Activated CD4-positive, alpha-beta memory T cell treated with anti-CD3 and anti-CD28 coated beads for 36 hours (primary cell): ENCODE measurements at regions of chr10 and their contacts with region 1.

Region 1: GRCh38 chr10:95864906-95865813 is 42.6 kb upstream of the CC2D2B start:
- DNase-seq: peak; percentile 61
- H3K4me3 Mint-ChIP-seq: no peak overlapping the region
- H3K27ac Mint-ChIP-seq: peak overlapping the region; percentile 12
- H3K4me1 Mint-ChIP-seq: peaks cover 19% of the 10 kb centered on the region
- H3K27me3 Mint-ChIP-seq: no peaks in the 10 kb centered on the region

Region 2: DNA sequence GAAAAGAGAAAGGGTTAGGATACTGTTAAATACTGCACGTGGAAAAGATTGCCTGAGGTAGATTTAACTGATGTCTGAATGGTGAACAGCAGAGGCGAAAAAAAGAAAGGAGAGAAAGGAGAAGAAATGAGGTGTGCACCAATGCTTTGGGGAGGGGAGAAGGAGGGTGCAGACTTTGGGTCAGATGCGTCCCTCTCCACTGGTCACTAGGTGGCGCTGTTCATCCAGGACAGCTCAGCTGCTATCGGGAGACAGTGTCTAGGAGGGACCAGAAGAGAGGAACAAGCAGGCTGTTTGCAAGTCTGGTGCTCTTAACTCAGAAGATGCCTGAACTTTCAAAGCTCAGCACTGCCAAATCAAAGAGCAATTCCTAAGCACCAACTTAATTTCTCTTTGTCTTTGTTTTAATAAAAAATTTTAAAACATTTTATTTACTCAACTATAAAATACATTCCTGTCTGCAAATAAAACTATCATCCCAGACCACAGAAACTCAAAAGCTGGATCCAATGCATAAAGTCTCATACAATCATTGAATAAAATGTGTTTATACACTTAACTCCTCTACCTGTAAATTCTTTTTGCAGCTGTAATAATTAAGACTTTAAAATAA is 490.5 kb before region 1 on chr10:
- CTCF ChIA-PET with region 1: no interaction called
- POLR2A ChIA-PET with region 1: no interaction called
- intact Hi-C with region 1: loop called (anchors 10 kb)
- DNase-seq: peak; percentile 81
- H3K4me3 Mint-ChIP-seq: no peak overlapping the region
- H3K27ac Mint-ChIP-seq: no peak overlapping the region
- H3K4me1 Mint-ChIP-seq: peaks cover 9% of the 10 kb centered on the region
- H3K27me3 Mint-ChIP-seq: peaks cover 14% of the 10 kb centered on the region

Region 3: GRCh38 chr10:95688648-95689047 is 176.5 kb before region 1 on chr10:
- CTCF ChIA-PET with region 1: interaction called, 99 read pairs
- POLR2A ChIA-PET with region 1: interaction called, 13 read pairs
- intact Hi-C with region 1: no loop called
- DNase-seq: no peak
- H3K4me3 Mint-ChIP-seq: no peak overlapping the region
- H3K27ac Mint-ChIP-seq: no peak overlapping the region
- H3K4me1 Mint-ChIP-seq: peaks cover 31% of the 10 kb centered on the region
- H3K27me3 Mint-ChIP-seq: no peaks in the 10 kb centered on the region

Region 4: DNA sequence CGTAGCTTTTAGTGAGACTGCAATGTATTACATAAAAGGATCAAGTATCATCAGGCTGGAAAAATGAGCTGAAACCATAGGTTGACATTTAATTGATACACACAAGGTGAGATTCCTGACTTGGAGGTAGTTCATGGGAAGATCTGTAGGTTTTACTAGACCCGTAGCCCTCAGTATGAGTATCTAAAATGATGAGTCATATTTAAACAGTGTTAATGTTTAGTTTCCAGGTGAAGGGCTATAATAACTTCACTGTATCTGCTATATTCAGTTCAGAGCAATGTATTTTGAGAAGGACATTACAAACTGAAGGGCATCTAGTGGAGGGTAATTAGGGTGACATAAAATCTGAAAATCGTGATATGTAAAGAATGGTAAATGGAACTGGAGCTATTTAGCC is 74.2 kb before region 1 on chr10:
- CTCF ChIA-PET with region 1: no interaction called
- POLR2A ChIA-PET with region 1: no interaction called
- intact Hi-C with region 1: loop called (anchors 2 kb)
- DNase-seq: no peak
- H3K4me3 Mint-ChIP-seq: no peak overlapping the region
- H3K27ac Mint-ChIP-seq: no peak overlapping the region
- H3K4me1 Mint-ChIP-seq: peaks cover 12% of the 10 kb centered on the region
- H3K27me3 Mint-ChIP-seq: peaks cover 5% of the 10 kb centered on the region

Region 5: DNA sequence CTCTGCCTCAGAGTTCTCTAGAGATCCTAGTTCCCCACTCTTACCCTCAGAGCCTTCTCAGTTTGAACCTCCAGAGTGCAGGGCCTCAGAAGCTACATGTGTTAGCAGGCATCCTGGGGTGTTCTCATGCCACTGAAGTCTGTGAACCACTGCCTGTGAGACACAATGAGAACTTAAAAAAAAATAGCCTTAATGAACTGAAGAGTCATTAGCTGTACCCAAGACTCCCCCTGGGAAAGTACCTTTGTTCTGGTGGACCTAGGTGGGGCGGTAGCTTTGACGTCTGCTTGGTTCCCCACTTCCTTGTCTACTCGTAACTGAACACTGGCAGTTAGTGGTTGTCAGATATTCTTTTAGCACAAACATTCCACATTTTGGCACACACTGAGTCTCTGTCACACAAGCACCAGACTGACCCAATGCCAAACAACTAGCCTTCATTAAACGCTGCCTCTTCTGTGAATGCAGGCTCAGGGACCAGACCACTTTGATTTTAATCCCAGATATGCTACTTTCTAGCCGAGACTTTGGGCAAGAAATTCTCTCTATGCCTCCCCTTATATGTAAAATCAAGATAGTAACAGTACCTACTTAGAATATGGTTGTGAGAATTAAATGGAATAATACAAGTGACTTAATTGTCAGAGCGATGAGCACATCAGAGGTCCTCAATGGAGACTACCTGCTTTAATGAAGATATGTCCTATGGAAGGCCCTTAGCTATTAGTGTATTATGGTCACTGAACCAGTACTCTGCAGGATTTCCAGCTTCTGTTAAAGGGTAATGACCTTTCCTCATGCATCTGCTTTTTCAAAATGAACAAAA is 32.7 kb before region 1 on chr10:
- CTCF ChIA-PET with region 1: interaction called, 17 read pairs
- POLR2A ChIA-PET with region 1: interaction called, 3 read pairs
- intact Hi-C with region 1: loop called (anchors 1 kb)
- DNase-seq: peak; percentile 77
- H3K4me3 Mint-ChIP-seq: peak overlapping the region; percentile 72
- H3K27ac Mint-ChIP-seq: peak overlapping the region; percentile 90
- H3K4me1 Mint-ChIP-seq: peaks cover 37% of the 10 kb centered on the region
- H3K27me3 Mint-ChIP-seq: no peaks in the 10 kb centered on the region

Region 6: GRCh38 chr10:95841661-95842498 is 23.3 kb before region 1 on chr10:
- CTCF ChIA-PET with region 1: interaction called, 49 read pairs
- POLR2A ChIA-PET with region 1: interaction called, 4 read pairs
- intact Hi-C with region 1: no loop called
- DNase-seq: peak; percentile 27
- H3K4me3 Mint-ChIP-seq: no peak overlapping the region
- H3K27ac Mint-ChIP-seq: peak overlapping the region; percentile 30
- H3K4me1 Mint-ChIP-seq: peaks cover 11% of the 10 kb centered on the region
- H3K27me3 Mint-ChIP-seq: no peaks in the 10 kb centered on the region

Region 7: DNA sequence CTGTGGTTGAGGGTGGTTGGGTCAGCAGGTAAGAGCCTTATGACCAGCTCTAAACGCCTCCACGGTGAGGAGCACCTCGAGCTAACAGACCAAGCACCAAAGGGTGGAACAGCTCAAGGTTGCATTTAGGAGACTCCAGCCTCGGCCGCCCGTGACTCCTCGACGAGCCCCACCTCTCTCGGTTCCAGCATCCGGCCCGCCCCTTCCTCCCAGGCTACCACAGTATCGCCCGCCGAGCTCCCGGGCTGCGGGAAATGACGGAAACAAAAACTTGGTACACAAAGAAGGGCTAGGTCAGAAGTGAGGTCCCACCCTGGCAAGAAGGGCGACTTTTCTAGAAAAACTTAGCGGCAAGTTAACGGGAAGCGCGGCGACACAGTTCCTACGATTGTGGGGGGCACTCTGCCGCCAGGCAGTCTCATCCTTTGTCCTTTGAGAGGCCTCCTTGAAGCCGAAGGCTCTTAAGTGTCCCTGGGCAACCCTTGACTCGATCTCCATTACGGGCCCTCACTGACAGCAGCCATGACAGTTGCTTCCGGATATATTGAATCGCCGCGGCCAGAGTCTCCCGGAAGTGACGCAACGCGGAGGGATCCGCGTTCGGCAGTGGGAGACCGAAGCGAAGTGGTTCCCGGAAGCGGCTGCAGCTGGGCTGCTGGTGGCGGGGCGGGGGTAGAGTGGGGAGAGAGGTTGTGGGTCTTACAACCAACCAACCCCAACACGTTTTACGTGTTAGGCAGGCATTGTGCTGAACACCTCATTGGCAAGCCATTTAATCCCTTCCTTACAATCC is 224.7 kb after region 1 on chr10:
- CTCF ChIA-PET with region 1: no interaction called
- POLR2A ChIA-PET with region 1: no interaction called
- intact Hi-C with region 1: no loop called
- DNase-seq: peak; percentile 95
- H3K4me3 Mint-ChIP-seq: peak overlapping the region; percentile 95
- H3K27ac Mint-ChIP-seq: peak overlapping the region; percentile 99
- H3K4me1 Mint-ChIP-seq: peaks cover 12% of the 10 kb centered on the region
- H3K27me3 Mint-ChIP-seq: peaks cover 15% of the 10 kb centered on the region